A549 (cell line): ENCODE measurements at regions of chr2 and their contacts with region 1.

Region 1: GRCh38 chr2:62415019-62415431 is 91.0 kb downstream of the TMEM17 start:
- DNase-seq: no peak
- ATAC-seq: no peak
- H3K4me3 ChIP-seq: no peak overlapping the region
- H3K27ac ChIP-seq: peak overlapping the region in 1 of 2 experiments; percentile 9; a peak in 1 of 6 replicates
- H3K4me1 ChIP-seq: peaks cover 13% of the 10 kb centered on the region
- CTCF ChIP-seq: no peak
- EP300 ChIP-seq: no peak
- POLR2A ChIP-seq: no peak
- RAD21 ChIP-seq: no peak

Region 2: GRCh38 chr2:61924895-61925663 is 489.9 kb before region 1 on chr2:
- CTCF ChIA-PET with region 1: interaction called, 19 read pairs
- POLR2A ChIA-PET with region 1: no interaction called
- DNase-seq: no peak
- ATAC-seq: 0 out of 6 replicates have a peak, but pooled peaks have one; percentile 24 to 27
- H3K4me3 ChIP-seq: no peak overlapping the region
- H3K27ac ChIP-seq: no peak overlapping the region
- H3K4me1 ChIP-seq: no peaks in the 10 kb centered on the region
- CTCF ChIP-seq: no peak
- EP300 ChIP-seq: no peak
- POLR2A ChIP-seq: no peak
- RAD21 ChIP-seq: no peak

Region 3: DNA sequence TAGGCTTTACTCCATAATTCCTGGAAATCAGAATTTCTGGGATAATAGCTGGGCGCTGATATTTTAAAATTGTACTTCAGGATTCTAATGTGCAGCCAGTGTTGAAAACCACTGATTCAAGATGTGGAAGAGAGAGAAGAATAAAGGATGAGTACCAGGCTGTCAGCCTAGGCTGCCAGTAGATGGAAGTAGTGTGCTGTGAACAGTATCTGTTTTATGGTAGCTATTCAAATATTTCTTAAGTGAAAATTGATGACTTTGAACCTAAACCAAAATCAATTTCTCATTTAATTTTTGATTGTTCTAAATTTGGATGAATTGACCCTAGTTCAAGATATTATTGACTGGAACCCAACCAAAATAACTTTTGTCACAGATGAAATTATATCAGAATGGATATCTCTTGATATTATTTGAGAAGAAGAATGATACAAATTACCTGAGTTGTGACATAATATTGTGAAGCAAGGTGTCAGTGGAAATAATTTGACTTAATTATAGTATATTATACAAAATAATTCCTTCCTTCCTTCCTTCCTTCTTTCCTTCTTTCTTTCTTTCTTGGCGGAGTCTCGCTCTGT is 421.5 kb before region 1 on chr2:
- CTCF ChIA-PET with region 1: interaction called, 127 read pairs
- POLR2A ChIA-PET with region 1: no interaction called
- DNase-seq: peak; percentile 31 to 67
- ATAC-seq: peak; percentile 70 to 88; a peak in 4 of 6 replicates
- H3K4me3 ChIP-seq: no peak overlapping the region
- H3K27ac ChIP-seq: no peak overlapping the region
- H3K4me1 ChIP-seq: peaks cover 6% of the 10 kb centered on the region; the same call in 2 of the 3 replicates
- CTCF ChIP-seq: peak; percentile 91
- EP300 ChIP-seq: no peak
- POLR2A ChIP-seq: no peak
- RAD21 ChIP-seq: peak; percentile 91 to 92

Region 4: DNA sequence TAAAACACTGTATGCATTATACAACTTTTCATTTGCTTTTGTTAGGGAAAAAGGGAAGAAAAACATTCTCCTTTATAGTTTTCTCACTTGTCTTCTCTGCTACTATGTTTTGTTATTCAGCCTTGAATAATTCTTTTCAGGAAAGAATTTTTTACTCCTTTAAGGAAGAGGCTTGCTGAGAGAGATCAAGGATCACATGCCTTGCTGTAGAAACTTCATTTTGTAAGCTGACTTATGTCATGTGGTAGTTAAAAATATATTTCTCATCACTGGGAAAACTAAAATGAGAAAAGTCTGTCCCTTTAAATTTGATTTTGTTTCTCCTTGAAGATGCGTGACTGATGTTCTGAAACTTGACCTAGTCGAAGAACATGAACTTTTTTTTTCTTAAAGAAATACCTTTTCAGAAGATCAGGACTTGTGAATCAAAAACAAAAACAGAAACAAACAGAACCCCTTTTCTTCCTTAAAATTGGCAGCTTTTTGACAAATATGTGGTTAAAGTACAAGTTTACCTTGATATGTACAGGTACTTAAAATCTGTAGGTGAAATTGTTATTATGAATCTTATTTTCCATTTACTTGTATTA is 364.5 kb before region 1 on chr2:
- CTCF ChIA-PET with region 1: no interaction called
- POLR2A ChIA-PET with region 1: no interaction called
- DNase-seq: no peak
- ATAC-seq: no peak
- H3K4me3 ChIP-seq: no peak overlapping the region
- H3K27ac ChIP-seq: no peak overlapping the region
- H3K4me1 ChIP-seq: no peaks in the 10 kb centered on the region
- CTCF ChIP-seq: no peak
- EP300 ChIP-seq: no peak
- POLR2A ChIP-seq: no peak
- RAD21 ChIP-seq: no peak

Region 5: GRCh38 chr2:62404913-62405312 is 10.1 kb before region 1 on chr2:
- CTCF ChIA-PET with region 1: interaction called, 37 read pairs
- POLR2A ChIA-PET with region 1: no interaction called
- DNase-seq: no peak
- ATAC-seq: no peak; a peak in 1 of 6 replicates
- H3K4me3 ChIP-seq: no peak overlapping the region
- H3K27ac ChIP-seq: no peak overlapping the region
- H3K4me1 ChIP-seq: peaks cover 10% of the 10 kb centered on the region; the same call in 2 of the 3 replicates
- CTCF ChIP-seq: no peak
- EP300 ChIP-seq: no peak
- POLR2A ChIP-seq: no peak
- RAD21 ChIP-seq: no peak

Region 6: DNA sequence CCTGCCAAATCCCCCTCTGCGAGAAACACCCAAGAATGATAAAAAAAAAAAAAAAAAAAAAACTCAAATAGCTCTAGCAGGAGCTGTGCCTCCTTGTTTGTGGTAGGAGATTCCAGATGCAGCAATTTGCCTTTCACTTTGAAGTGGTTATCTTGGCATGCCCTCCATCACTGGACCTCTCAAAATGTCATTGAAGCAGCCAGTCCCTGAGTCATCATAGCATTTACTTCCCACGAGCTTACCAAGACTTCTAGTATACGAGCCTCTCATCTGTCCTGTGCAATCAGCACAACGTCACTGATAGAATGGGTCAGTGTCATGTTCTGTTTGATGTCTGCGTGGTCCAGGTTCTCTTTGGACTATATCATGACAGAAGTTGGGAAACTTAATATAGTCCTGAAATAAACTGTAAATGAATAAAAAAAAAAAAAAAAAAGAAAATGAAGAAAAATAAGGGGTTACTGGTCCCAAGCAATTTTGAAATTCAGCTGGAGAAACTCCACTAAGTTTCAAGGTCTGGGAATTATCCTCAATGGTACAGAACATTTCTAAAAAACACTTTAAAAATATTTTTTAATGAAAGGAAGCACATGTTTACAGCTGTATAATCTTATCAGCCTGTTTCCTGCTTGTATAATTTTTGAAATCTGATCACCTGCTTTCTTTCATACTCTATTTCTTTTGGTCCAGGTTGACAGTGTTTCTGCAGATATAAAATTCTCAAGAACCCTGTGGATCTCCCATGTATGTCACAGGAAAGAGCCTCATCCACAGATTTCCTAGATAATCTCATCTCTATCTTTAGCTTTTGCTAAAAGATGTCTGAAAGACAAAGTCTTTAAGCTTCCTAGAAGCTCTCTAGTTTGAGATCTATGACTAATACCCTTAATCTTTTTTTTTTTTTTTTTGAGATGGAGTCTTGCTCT is 216.4 kb after region 1 on chr2:
- CTCF ChIA-PET with region 1: no interaction called
- POLR2A ChIA-PET with region 1: no interaction called
- DNase-seq: no peak
- ATAC-seq: no peak
- H3K4me3 ChIP-seq: no peak overlapping the region
- H3K27ac ChIP-seq: no peak overlapping the region
- H3K4me1 ChIP-seq: no peaks in the 10 kb centered on the region
- CTCF ChIP-seq: no peak
- EP300 ChIP-seq: no peak
- POLR2A ChIP-seq: no peak
- RAD21 ChIP-seq: no peak